Activated CD4-positive, alpha-beta memory T cell treated with anti-CD3 and anti-CD28 coated beads, Interleukin-2, amount 10 ng/mL, durations not matched to agents 7 days and 5 days (primary cell): ENCODE measurements at regions of chr17 and their contacts with region 1.

Region 1: DNA sequence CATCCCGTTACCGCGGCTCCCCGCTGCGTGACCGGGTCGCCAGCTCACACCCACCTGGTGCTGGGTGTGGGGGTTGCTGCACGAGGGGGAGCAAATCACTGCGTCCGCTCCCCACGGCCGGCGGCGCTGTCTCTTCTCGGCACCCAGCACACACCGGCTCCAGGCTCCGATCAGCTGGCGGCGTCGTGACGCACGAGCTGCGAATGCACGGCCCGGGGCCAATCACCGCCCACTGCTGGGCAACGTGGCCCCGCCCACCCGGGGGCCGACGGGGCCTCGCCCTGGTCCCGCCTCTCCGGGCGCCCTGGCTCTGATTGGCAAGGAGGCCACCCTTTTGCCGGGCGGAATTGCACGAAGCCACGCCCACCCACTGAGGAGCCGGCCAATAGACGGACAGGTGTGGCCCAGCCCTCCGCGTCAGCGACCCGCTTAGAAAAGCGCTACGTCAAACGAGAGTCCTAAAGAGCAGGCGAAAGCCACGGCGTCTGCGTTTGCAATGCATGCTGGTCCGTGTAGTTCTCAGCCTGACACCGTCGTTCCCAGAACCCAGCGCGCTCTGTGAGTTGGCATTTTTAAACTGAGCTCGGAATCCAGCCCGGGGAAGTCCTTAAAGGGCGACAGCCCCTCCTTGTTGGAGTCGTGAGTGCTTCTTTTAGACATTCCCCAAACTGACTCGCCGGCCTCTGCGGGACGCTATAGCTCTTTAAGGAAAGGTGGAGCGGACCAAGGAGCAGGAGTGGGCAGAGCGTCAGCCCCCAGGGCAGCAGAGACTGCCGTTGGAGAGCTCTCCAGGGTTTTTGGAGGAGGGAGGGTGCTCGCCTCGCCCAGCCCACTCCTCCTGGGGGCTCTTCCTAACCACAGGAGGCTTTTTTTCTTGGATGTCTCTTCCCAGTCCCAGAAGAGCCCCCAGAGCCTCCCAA is 6.2 kb upstream of the TLCD2 start:
- DNase-seq: peak; percentile 100
- H3K4me3 Mint-ChIP-seq: peak overlapping the region; percentile 91
- H3K27ac Mint-ChIP-seq: peak overlapping the region; percentile 98
- H3K4me1 Mint-ChIP-seq: peaks cover 62% of the 10 kb centered on the region
- H3K27me3 Mint-ChIP-seq: no peaks in the 10 kb centered on the region

Region 2: DNA sequence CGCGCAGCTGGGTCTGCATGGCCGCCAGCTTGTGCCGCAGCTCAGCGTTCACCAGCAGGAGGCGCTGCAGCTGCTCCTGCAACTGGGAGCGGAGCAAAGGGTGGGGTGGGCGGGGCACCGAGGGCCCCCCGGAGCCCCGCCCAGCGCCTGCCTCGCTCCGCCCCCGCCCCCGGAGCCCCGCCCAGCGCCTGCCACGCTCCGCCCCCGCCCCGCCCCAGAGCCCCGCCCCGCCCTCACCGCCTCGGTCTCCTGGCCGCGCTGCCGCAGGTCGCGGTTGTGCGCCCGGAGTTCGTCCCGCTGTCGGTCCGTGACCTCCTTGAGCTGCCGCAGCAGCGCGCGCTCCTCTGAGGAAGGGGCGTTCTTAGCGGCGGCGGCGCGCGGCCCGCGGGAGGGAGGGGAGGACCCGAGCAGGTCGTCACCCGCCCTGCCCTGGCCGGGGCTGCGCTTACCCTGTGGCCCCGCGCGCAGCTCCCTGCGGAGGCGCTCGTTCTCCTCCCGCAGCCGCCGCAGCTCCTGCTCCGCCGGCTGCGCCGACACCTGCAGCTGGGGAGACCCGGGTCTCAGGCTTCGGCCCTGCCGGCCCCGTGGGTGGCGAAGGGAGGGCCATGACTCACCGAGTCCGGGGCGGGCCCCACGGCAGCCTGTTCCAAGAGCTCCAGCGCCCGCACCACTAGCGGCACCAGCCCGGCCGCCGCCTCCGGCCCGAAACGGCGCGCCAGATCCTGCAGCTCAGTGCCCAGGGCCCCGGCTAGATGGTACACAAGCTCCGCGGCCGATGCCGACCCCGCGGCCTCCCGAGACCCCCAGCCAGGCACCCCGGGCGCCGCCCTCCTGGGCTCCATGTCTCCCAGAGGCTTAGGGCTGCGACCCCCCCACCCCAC is 67.1 kb before region 1 on chr17:
- CTCF ChIA-PET with region 1: interaction called, 12 read pairs
- POLR2A ChIA-PET with region 1: interaction called, 19 read pairs
- DNase-seq: peak; percentile 95
- H3K4me3 Mint-ChIP-seq: peak overlapping the region; percentile 62
- H3K27ac Mint-ChIP-seq: peak overlapping the region; percentile 64
- H3K4me1 Mint-ChIP-seq: peaks cover 37% of the 10 kb centered on the region
- H3K27me3 Mint-ChIP-seq: no peaks in the 10 kb centered on the region

Region 3: DNA sequence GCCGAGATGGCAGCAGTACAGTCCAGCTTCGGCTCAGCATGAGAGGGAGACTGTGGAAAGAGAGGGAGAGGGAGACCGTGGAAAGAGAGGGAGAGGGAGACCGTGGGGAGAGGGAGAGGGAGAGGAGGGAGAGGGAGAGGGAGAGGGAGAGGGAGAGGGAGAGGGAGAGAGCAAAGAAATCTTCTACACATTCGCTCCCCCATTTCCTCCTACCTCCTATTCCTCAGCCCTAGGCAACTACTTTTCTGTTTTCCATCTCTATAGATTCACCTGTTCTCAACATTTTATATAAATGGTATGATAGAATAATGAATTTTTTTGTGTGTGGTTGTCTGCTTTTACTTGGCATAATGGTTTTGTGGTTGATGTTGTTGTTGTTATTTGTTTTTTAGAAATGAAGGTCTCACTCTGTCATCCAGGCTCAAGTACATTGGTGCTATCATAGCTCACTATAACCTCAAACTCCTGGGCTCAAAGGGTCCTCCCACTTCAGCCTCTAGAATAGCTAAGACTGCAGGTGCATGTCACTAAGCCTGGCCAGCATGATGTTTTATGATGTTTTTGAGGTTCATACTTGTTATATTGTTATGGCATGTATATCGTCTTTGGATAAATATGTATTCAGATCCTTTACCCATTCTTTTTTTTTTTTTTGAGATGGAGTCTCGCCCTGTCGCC is 25.7 kb before region 1 on chr17:
- CTCF ChIA-PET with region 1: no interaction called
- POLR2A ChIA-PET with region 1: no interaction called
- DNase-seq: no peak
- H3K4me3 Mint-ChIP-seq: no peak overlapping the region
- H3K27ac Mint-ChIP-seq: no peak overlapping the region
- H3K4me1 Mint-ChIP-seq: peaks cover 3% of the 10 kb centered on the region
- H3K27me3 Mint-ChIP-seq: peaks cover 2% of the 10 kb centered on the region

Region 4: GRCh38 chr17:1730328-1731193 is 14.2 kb after region 1 on chr17:
- CTCF ChIA-PET with region 1: no interaction called
- POLR2A ChIA-PET with region 1: interaction called, 56 read pairs
- DNase-seq: no peak
- H3K4me3 Mint-ChIP-seq: no peak overlapping the region
- H3K27ac Mint-ChIP-seq: no peak overlapping the region
- H3K4me1 Mint-ChIP-seq: peaks cover 16% of the 10 kb centered on the region
- H3K27me3 Mint-ChIP-seq: no peaks in the 10 kb centered on the region

Region 5: DNA sequence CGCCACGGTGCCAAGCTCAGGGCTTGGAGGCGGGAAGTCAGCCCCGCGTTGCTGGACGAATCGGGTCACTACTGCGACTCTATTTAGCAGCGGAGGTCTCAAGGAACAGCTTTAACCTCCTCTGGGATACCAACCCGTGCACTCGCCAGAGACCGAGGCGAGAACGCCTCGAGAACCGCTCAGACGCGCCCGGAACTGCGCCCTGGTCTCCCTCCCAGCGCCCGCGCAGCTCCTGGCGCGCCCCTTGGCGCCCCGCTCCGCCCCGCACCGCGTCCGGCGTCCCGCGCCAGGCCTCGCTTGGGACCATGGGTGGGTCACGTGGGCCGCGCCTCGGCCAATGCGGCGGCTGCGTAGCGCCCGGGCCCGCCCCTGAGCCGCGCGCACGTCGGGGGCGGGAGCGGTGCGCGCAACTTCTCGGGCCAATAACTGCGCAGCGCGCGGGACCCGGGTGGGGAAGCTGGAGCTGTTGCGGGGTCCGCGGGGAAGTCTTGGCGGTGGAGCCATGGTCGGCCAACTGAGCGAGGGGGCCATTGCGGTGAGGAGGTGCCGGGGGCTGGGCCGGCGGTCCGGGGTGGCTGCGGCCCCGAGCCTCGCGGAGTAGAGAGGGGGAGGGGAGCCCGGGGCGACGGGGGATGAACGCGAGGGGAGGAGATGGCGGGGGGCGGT is 113.4 kb after region 1 on chr17 and contains the starts of genes RPA1 and SMYD4:
- CTCF ChIA-PET with region 1: interaction called, 4 read pairs
- POLR2A ChIA-PET with region 1: interaction called, 46 read pairs
- DNase-seq: peak; percentile 92
- H3K4me3 Mint-ChIP-seq: peak within 1 kb of the TSS; percentile 96
- H3K27ac Mint-ChIP-seq: peak within 1 kb of the TSS; percentile 84
- H3K4me1 Mint-ChIP-seq: peaks cover 69% of the 10 kb centered on the region
- H3K27me3 Mint-ChIP-seq: no peaks in the 10 kb centered on the region
- total RNA-seq, gene RPA1: 176 to 186 TPM
- total RNA-seq, gene SMYD4: 27.4 to 29.3 TPM

Region 6: GRCh38 chr17:2041561-2042366 is 325.4 kb after region 1 on chr17 and contains the start of gene OVCA2:
- CTCF ChIA-PET with region 1: no interaction called
- POLR2A ChIA-PET with region 1: interaction called, 10 read pairs
- DNase-seq: peak; percentile 98
- H3K4me3 Mint-ChIP-seq: peak within 1 kb of the TSS; percentile 97
- H3K27ac Mint-ChIP-seq: peak within 1 kb of the TSS; percentile 92
- H3K4me1 Mint-ChIP-seq: peaks cover 22% of the 10 kb centered on the region
- H3K27me3 Mint-ChIP-seq: no peaks in the 10 kb centered on the region
- total RNA-seq, gene OVCA2: 43.2 to 45.4 TPM

Region 7: GRCh38 chr17:2336215-2336851 is 620.0 kb after region 1 on chr17 and contains the start of gene TSR1:
- CTCF ChIA-PET with region 1: no interaction called
- POLR2A ChIA-PET with region 1: interaction called, 10 read pairs
- DNase-seq: peak; percentile 91
- H3K4me3 Mint-ChIP-seq: peak within 1 kb of the TSS; percentile 99
- H3K27ac Mint-ChIP-seq: peak within 1 kb of the TSS; percentile 88
- H3K4me1 Mint-ChIP-seq: peaks cover 8% of the 10 kb centered on the region
- H3K27me3 Mint-ChIP-seq: no peaks in the 10 kb centered on the region
- total RNA-seq, gene TSR1: 22.5 to 23.5 TPM